ENCODE measurements at regions of chr1 and their contacts with region 1.

Region 1: GRCh38 chr1:204730826-204731459 is 45.4 kb upstream of the LRRN2 start:
- DNase-seq: no peak
- H3K4me3 ChIP-seq: no peak overlapping the region
- H3K27me3 ChIP-seq: peaks cover 24% of the 10 kb centered on the region
- CTCF ChIP-seq: no peak

Region 2: DNA sequence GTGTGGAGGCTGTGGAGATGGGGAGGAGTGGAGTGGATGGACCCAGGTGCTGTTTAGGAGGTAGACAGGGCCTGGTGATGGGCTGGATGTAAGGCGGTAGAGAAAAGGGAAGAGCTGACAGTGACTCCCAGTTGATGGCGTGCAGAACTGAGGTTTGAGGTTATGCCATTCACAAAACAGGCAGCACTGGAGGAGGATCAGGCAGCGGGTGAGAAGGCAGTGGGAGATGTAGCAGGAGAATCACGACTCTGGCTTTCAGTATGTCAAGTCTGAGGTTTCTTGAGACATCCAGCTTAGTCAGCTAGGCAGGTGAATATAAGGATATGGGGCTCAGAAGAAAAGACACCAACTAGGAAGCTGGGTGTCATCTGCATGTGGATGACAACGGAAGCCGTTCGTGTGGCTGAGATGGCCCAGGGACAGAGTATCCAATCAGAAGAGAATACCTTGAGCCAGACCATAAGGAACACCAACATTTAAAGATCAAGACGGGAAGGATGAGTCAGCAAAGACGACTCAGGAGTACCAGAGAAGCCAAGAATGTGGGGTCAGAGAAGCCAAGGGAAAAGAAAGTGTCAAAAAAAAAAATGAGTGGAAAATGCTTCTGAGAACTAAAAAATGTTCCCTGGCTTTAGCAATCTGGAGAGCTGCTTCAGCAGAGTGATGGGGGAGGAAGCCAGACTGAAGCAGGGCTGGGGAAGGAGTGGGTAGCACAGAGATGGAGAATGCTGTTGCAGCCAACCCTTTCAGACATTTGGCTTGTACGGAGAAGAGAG is 60.6 kb before region 1 on chr1:
- CTCF ChIA-PET with region 1: no interaction called
- POLR2A ChIA-PET with region 1: no interaction called
- DNase-seq: peak; percentile 3
- H3K4me3 ChIP-seq: no peak overlapping the region
- H3K27me3 ChIP-seq: peaks cover 19% of the 10 kb centered on the region
- CTCF ChIP-seq: no peak

Region 3: GRCh38 chr1:204714861-204715511 is 16.0 kb before region 1 on chr1:
- CTCF ChIA-PET with region 1: no interaction called
- POLR2A ChIA-PET with region 1: no interaction called
- DNase-seq: no peak
- H3K4me3 ChIP-seq: no peak overlapping the region
- H3K27me3 ChIP-seq: peaks cover 39% of the 10 kb centered on the region
- CTCF ChIP-seq: no peak

Region 4: GRCh38 chr1:204746838-204747442 is 16.0 kb after region 1 on chr1:
- CTCF ChIA-PET with region 1: interaction called, 14 read pairs
- POLR2A ChIA-PET with region 1: no interaction called
- DNase-seq: no peak
- H3K4me3 ChIP-seq: no peak overlapping the region
- H3K27me3 ChIP-seq: peaks cover 12% of the 10 kb centered on the region
- CTCF ChIP-seq: peak; percentile 98